IMR-90 (cell line): ENCODE measurements at regions of chr7 and their contacts with region 1.

Region 1: GRCh38 chr7:21253740-21254687 is 173.9 kb upstream of the SP4 start:
- DNase-seq: peak; percentile 26
- ATAC-seq: peak; percentile 69; the same call in 1 of the 2 replicates
- H3K4me3 ChIP-seq: no peak overlapping the region
- H3K27ac ChIP-seq: no peak overlapping the region
- H3K4me1 ChIP-seq: no peaks in the 10 kb centered on the region
- H3K27me3 ChIP-seq: no peaks in the 10 kb centered on the region
- CTCF ChIP-seq: peak; percentile 51
- POLR2A ChIP-seq: no peak
- RAD21 ChIP-seq: peak; percentile 34; the same call in 1 of the 2 replicates

Region 2: DNA sequence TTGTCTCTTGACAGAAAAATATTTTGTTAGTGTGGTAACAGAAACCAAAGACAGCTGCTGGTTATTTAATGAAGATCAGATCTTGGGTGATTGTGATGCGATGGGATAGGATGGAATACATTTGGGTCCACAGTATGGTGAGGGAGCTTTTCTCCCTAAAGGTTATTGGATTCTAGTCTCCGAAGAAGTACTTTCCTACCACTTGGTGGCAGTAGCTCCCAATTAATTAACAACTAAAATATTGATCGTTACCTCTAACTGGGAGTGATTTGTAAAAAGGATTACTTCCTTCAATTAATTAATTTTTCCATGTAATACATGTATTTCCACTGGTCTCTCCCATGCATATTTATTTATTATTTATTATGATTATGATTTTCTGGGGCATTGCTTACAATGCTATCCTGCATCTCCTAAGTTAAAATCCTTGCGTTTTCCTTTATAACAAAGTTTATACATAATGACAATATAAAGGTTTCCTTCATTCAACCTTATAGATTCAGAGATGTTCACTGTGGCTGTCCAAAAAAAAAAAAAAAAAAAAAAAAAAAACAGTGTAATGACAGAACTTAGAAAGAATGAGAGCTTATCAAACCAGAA is 1506.2 kb before region 1 on chr7:
- CTCF ChIA-PET with region 1: interaction called, 3 read pairs
- POLR2A ChIA-PET with region 1: no interaction called
- dilution Hi-C with region 1: no loop called
- in situ Hi-C with region 1: no loop called
- intact Hi-C with region 1: loop called (anchors 2 kb)
- DNase-seq: peak; percentile 22
- ATAC-seq: peak; percentile 56
- H3K4me3 ChIP-seq: no peak overlapping the region
- H3K27ac ChIP-seq: no peak overlapping the region
- H3K4me1 ChIP-seq: no peaks in the 10 kb centered on the region
- H3K27me3 ChIP-seq: no peaks in the 10 kb centered on the region
- CTCF ChIP-seq: peak; percentile 59
- POLR2A ChIP-seq: no peak
- RAD21 ChIP-seq: peak; percentile 55

Region 3: GRCh38 chr7:20778063-20778721 is 475.8 kb before region 1 on chr7:
- CTCF ChIA-PET with region 1: no interaction called
- POLR2A ChIA-PET with region 1: no interaction called
- dilution Hi-C with region 1: no loop called
- in situ Hi-C with region 1: no loop called
- intact Hi-C with region 1: loop called (anchors 2 kb)
- DNase-seq: no peak
- ATAC-seq: peak; percentile 98
- H3K4me3 ChIP-seq: peak overlapping the region; percentile 20
- H3K27ac ChIP-seq: no peak overlapping the region
- H3K4me1 ChIP-seq: no peaks in the 10 kb centered on the region
- H3K27me3 ChIP-seq: peaks cover 45% of the 10 kb centered on the region
- CTCF ChIP-seq: peak; percentile 52
- POLR2A ChIP-seq: no peak
- RAD21 ChIP-seq: peak; percentile 64

Region 4: GRCh38 chr7:21767300-21767900 is 513.4 kb after region 1 on chr7:
- CTCF ChIA-PET with region 1: no interaction called
- POLR2A ChIA-PET with region 1: no interaction called
- dilution Hi-C with region 1: no loop called
- in situ Hi-C with region 1: no loop called
- intact Hi-C with region 1: loop called (anchors 1 kb)
- DNase-seq: peak; percentile 24
- ATAC-seq: no peak
- H3K4me3 ChIP-seq: no peak overlapping the region
- H3K27ac ChIP-seq: no peak overlapping the region
- H3K4me1 ChIP-seq: no peaks in the 10 kb centered on the region
- H3K27me3 ChIP-seq: no peaks in the 10 kb centered on the region
- CTCF ChIP-seq: peak; percentile 32; the same call in 1 of the 2 replicates
- POLR2A ChIP-seq: no peak
- RAD21 ChIP-seq: peak; percentile 43